Activated CD4-positive, alpha-beta memory T cell treated with anti-CD3 and anti-CD28 coated beads, Interleukin-2, amount 10 ng/mL, durations not matched to agents 7 days and 5 days (primary cell): ENCODE measurements at regions of chr11 and their contacts with region 1.

Region 1: DNA sequence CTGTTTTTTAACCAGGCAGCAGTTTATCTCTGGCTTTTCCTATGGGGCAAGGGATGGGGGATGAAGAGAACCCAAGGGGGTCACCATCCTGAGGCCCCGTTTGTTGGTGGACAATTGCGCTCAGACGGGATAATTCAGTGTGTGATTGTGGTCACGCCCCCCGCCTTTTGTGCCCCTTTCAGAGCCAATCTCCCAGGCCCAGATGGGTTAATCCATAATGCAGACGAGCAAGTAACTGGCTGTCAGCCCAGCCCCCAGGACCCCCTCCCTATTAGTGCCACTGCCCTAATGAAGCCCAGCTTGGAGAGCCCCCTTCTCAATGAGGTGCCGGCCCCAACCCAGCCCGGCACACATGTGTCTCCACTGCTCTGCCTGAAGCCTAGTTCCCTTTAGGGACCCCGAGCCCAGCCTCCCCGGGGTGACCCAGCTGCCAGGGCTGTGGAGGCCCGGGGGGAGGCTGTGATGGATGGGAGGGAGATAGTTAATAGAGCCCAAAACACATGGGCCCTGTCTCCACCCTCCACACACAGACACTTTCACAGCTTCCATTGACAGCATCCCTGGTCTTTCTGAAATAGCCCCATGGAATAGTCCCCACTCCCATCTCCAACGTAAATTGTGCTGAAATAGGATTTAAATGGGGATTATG is 19.0 kb upstream of the ROBO3 start:
- DNase-seq: no peak
- H3K4me3 Mint-ChIP-seq: no peak overlapping the region
- H3K27ac Mint-ChIP-seq: no peak overlapping the region
- H3K4me1 Mint-ChIP-seq: peaks cover 2% of the 10 kb centered on the region
- H3K27me3 Mint-ChIP-seq: peaks cover 94% of the 10 kb centered on the region

Region 2: DNA sequence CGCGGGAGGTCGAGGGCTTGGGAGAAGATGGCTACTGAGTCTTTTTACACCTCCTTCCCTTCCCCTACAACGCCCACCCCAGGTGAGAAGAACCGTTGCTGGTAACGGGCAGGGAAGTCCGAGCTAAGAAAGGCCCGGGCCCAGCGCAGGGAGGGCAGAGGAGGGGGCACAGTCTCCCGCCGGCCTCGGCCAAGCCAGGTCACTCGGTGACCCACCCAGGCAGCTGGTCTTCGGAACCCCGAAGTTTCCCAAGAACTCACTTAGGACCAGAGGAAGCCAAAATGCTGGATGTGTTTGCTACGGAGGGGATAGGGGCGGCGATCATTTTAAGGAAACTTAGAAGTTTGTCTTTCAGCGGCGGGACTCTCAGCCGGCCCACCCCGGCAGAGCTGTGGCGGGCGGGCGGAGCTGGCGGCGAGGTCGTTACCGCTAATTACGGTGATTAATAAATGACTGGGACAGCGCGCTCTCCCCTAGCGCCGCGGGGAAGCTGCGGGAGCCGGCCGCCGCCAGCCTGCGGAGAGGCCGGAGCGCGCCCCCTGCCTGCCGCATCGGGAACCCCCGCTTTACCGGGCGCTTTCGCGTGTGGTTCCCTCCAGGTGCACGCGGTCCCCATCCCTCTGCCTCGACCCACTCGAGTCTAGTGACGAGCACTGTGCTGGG is 19.9 kb after region 1 on chr11:
- CTCF ChIA-PET with region 1: interaction called, 14 read pairs
- POLR2A ChIA-PET with region 1: no interaction called
- DNase-seq: peak; percentile 54
- H3K4me3 Mint-ChIP-seq: no peak overlapping the region
- H3K27ac Mint-ChIP-seq: no peak overlapping the region
- H3K4me1 Mint-ChIP-seq: peaks cover 20% of the 10 kb centered on the region
- H3K27me3 Mint-ChIP-seq: peaks cover 93% of the 10 kb centered on the region